Posterior cingulate gyrus (tissue), 11 donors: ENCODE measurements at regions of chr11 and their contacts with region 1.

Region 1: DNA sequence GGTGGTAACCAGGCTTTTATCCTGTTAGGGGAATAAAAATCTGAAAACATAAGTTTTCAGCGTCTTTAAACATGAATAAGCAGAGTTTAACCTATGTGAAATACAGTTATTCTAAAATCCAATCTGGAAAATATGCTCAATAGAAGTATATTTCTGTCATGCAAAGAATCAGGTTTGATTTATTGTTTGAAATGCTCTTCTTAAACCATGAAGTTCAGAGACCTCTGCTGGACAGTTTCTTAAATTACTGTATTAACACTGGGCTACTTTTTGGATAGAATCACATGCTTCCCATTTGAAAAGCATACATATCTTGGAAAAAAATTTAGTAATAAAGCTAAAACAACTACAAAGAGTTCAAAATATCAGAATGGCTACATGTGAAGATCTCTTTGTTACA is 25.4 kb downstream of the APIP start:
- DNase-seq: no peak

Region 2: DNA sequence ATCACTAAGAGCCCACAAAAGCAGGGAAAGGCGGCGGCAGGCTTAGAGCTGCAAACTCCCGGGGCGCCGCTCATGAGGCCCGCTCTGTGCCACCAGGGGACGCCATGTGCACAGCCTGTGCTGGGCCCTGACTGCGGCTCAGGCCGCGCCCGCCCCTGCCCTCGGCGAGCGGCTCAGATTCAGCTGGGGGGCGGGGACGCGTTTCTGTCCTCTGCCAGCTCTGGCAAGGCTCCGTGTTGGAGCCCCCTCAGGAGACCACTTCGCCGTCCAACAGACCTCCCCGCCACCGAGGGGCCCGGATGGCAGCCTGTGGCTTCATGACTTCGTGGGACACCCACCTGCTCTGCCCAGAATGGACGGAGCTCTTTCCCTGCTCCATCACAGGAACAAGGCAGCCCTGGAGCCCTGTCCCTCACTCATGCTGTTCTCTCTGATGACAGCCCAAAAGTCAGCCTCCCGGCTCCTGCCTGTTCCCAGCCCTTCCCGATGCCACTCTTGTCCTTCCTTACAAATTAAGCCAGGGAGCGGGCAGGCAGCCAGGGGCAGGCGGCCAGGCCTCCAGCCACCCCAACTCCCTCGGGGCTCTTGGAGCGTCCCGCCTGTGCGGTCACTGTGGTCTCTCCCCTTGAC is 716.3 kb before region 1 on chr11:
- intact Hi-C with region 1: loop called (anchors 10 kb)
- DNase-seq: peak; percentile 70 to 98 (median 87)

Region 3: GRCh38 chr11:34512840-34513681 is 377.8 kb before region 1 on chr11:
- intact Hi-C with region 1: loop called (anchors 5 kb)
- DNase-seq: peak in 7 of 10 donors; percentile 34 to 92 (median 59)

Region 4: DNA sequence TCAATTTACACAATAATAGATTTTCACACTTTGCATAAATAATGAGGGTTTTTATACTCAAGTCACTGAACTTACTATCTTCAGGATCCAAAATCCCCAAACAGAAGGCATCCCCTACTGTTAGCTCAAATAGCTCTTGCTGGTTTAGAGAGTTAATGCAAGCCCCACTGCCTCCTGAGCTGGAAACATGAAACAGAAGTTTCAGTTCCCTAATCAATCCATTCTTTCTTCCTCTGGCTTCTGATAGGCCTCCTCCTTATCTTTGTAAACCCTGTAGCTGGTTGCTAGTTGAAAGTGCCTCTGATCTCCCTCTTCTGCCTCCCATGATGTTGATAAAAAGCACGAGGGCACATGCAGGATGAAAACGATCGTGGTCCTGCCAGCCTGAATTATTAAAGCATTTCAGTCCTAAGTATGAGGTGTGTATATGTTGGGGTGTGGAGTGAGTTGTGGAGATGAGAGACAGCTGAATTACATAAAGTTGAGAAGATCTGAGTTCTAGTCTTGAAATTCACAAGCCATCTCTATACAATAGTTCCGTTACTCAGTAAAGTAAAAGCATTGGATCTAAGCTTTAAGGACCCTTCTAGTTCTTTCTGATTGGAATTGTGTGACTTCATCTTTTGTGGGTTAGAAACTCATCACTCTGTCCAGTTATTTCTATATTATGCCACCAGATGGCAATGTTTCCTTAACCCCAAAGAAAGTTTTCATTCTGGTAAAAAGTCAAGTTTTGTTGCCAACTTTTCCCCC is 304.9 kb before region 1 on chr11:
- intact Hi-C with region 1: loop called (anchors 1 kb)
- DNase-seq: no peak

Region 5: DNA sequence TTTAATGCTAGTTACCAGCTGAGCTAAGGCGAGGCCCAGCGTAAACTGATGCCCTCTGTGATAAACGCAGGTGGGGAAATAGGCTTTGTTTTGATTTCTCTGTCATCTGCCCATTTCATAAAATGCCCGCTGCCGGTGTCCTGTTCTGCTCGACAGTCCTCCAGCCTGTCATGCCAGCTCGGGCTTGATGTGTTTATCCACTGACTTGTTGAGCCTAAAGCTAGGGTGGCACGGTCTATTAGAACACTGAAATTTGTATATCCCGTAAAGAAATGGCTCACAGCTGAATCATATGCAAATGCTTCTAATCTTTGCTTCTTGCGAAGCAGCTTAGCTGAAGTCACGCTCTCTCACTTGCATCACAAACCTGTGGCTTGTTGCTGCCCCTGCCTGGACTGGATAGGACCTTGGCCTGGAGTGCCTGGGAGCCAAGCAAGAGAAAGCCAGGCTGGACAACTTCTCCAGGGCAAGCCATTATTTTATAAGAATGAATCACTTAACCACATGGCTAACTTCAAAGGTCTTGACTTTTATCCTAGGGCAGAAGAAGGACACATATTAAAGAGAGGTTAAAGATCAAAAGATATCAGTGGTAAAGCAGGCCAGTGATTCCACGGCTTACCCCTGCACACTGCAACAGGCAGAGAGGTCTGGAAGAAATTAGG is 236.9 kb before region 1 on chr11:
- intact Hi-C with region 1: loop called (anchors 10 kb)
- DNase-seq: no peak